Activated T-helper 1 cell treated with anti-CD3 and anti-CD28 coated beads, Interleukin-12 subunit alpha, Interleukin-12 subunit beta, Interleukin-2, Interleukin-4 antibody, amounts not matched to agents 30 ng/mL and 10 ng/mL and 1 ng/mL, durations not matched to agents 14 hours and 24 hours and 36 hours (primary cell): ENCODE measurements at regions of chr18 and their contacts with region 1.

Region 1: GRCh38 chr18:63320046-63320689 is 599 bp upstream of the BCL2 start:
- DNase-seq: peak; percentile 83
- H3K4me3 Mint-ChIP-seq: peak overlapping the region; percentile 90
- H3K27ac Mint-ChIP-seq: peak overlapping the region; percentile 94
- H3K4me1 Mint-ChIP-seq: peaks cover 42% of the 10 kb centered on the region
- H3K27me3 Mint-ChIP-seq: no peaks in the 10 kb centered on the region

Region 2: DNA sequence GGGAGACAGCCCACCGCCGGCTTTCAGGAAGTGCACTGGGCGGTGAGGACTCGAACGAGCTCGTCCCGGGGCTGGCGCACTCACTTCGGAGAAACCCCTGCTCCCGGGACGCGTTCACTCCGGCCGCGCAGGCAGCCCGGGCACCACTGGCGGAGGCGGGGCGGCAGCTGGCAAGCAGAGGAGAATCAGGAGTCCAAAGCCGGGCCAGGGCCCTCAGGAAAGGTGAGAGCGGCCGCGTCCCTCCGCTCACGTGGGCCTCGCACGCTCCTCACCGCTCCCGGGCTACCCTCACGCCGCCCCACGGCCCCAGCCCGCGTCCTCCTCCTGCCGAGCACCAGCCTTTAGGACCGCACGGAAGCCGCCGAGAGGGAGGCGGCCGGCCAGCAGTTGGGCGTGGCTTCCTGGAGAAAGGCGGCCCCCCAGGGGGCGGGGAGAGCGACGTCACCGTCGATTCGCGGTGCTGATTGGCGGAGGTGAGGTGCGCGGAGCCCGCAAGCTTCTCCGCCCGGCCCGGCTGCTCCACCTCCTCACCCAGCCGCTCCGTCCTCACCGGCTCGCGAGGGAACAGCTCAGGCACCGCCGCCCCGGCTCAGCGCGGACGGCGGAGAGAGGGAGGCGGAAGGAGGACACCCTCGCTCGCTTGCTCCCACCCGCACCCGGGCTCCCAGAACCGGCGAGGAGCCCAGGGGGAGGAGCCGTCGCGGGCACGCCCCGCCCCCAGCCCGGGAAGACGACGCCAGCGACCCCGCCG is 797.5 kb before region 1 on chr18 and contains the start of gene ZCCHC2:
- intact Hi-C with region 1: loop called (anchors 10 kb)
- DNase-seq: peak; percentile 99
- H3K4me3 Mint-ChIP-seq: peak within 1 kb of the TSS; percentile 98
- H3K27ac Mint-ChIP-seq: peak within 1 kb of the TSS; percentile 94
- H3K4me1 Mint-ChIP-seq: peaks cover 35% of the 10 kb centered on the region
- H3K27me3 Mint-ChIP-seq: peaks cover 4% of the 10 kb centered on the region
- total RNA-seq, gene ZCCHC2: 55.7 and 58.8 TPM in 2 replicates

Region 3: DNA sequence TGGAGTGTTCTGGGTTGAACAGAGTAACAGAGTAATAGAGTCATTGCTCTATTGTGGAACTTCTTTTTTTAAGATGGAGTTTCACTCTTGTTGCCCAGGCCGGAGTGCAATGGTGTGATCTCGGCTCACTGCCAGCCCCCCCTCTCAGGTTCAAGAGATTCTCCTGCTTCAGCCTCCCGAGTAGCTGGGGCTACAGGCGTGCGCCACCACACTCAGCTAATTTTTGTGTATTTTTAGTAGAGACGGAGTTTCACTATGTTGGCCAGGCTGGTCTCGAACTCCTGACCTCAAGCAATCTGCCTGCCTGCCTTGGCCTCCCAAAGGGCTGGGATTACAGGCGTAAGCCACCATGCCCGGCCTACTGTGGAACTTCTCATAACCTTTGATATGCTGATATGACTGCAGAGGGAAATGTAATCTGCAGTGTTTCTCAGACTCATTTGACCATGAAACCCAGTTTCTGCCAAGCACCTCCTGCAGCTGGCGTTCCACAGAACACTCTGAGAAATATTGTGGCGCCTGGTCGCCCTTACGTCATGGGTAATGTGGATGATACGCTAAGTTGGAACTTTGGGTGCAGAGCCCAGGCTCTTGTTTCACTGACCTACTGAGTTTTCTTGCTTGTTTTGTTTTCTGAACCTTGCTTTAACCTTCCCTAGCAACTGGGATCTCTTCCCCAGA is 214.4 kb before region 1 on chr18:
- intact Hi-C with region 1: loop called (anchors 1 kb)
- DNase-seq: no peak
- H3K4me3 Mint-ChIP-seq: no peak overlapping the region
- H3K27ac Mint-ChIP-seq: no peak overlapping the region
- H3K4me1 Mint-ChIP-seq: peaks cover 37% of the 10 kb centered on the region
- H3K27me3 Mint-ChIP-seq: peaks cover 20% of the 10 kb centered on the region

Region 4: DNA sequence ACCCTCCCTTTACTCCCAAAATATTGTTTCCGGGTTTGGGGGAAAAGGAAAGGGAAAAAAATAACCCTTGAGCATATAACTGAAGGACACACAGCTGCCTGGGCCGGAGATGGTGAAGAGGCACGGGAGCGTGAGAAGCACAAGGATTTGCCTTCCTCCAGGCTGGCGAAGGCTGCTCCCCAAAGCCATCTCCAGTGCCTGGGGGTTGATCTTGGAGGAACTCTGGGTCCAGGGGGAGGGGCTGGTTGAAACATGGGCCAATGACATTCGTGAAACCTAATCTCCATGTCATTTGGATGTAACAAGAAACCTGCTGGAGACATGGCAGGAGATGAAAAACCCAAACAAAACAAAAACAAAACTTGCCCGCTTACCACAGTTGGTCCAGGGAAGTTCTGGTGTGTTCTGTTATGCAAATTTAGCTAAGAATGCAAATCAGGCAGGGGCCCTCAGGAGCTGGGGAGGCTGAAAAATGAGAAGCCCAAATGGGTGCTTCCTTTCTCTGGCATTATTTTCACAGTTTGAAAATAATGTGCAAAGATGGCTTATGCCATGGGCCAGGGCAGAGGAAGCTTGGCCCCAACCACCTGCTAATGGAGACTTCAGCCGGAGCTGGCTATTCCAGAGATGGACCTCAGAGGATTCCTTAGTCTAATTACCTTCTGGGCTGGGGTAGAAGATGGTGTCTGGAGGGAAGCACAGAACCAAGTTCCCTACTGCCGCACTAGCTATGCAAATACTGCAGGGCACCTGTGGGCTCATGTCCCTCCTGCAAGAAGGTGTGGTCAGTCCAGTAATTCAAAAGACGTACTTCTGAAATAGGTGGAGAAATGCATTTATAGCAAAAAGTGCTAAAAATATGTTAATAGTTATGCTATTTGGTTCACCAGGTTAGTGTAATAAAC is 181.5 kb before region 1 on chr18:
- intact Hi-C with region 1: loop called (anchors 1 kb)
- DNase-seq: no peak
- H3K4me3 Mint-ChIP-seq: peak overlapping the region; percentile 73
- H3K27ac Mint-ChIP-seq: peak overlapping the region; percentile 90
- H3K4me1 Mint-ChIP-seq: peaks cover 71% of the 10 kb centered on the region
- H3K27me3 Mint-ChIP-seq: no peaks in the 10 kb centered on the region

Region 5: DNA sequence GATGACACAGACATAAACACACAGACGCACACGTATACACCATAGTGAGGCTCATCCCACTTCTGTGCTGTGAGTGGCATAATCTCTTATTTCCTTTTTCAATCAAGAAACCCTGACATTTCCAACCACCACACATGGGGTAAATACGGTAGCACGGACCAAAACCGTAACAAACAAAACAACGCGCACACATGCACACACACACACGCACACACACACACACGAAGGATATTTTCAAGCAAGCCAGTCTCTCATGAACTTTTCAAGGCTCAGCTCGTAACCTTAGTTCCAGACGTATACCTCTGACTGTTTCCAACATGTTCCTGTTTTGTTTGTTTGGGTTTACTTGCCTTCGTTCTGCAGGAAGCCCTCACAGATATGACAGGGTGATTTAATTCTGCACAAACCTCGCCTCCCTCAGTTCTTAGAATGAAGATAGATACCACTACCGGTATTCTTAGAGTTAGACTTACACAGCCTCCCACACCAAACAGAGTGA is 120.4 kb before region 1 on chr18:
- intact Hi-C with region 1: loop called (anchors 1 kb)
- DNase-seq: peak; percentile 60
- H3K4me3 Mint-ChIP-seq: no peak overlapping the region
- H3K27ac Mint-ChIP-seq: no peak overlapping the region
- H3K4me1 Mint-ChIP-seq: peaks cover 25% of the 10 kb centered on the region
- H3K27me3 Mint-ChIP-seq: no peaks in the 10 kb centered on the region

Region 6: GRCh38 chr18:63267975-63268721 is 52.0 kb before region 1 on chr18:
- intact Hi-C with region 1: loop called (anchors 1 kb)
- DNase-seq: no peak
- H3K4me3 Mint-ChIP-seq: peak overlapping the region; percentile 15
- H3K27ac Mint-ChIP-seq: peak overlapping the region; percentile 65
- H3K4me1 Mint-ChIP-seq: peaks cover 74% of the 10 kb centered on the region
- H3K27me3 Mint-ChIP-seq: no peaks in the 10 kb centered on the region

Region 7: DNA sequence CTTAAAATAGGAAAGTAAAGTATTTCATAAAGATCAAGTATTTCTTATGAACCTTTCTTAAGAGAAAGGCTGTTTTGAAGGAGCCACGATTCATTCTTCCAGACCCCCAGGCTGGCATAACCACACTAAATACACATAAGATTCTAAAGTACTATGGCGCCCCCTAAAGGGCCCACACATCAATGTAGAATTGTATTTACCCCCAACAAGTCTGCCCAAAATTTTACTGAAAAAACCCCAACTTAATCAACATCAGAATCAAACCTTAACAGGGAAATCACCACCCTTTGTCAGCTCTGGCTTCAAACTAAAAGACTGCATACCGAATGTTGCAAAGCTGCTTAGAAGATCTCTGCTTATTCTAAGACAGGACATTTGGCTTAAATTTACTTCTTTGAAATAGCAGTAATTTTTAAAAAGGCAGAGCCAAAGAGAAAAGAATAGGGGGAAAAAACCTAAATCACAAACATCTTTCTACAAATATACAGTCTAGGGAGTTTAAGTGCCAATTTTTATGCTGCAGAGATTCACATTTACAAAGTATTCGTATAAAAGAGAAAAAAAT is 19.8 kb after region 1 on chr18:
- intact Hi-C with region 1: no loop called
- DNase-seq: peak; percentile 19
- H3K4me3 Mint-ChIP-seq: no peak overlapping the region
- H3K27ac Mint-ChIP-seq: no peak overlapping the region
- H3K4me1 Mint-ChIP-seq: peaks cover 19% of the 10 kb centered on the region
- H3K27me3 Mint-ChIP-seq: no peaks in the 10 kb centered on the region

Region 8: DNA sequence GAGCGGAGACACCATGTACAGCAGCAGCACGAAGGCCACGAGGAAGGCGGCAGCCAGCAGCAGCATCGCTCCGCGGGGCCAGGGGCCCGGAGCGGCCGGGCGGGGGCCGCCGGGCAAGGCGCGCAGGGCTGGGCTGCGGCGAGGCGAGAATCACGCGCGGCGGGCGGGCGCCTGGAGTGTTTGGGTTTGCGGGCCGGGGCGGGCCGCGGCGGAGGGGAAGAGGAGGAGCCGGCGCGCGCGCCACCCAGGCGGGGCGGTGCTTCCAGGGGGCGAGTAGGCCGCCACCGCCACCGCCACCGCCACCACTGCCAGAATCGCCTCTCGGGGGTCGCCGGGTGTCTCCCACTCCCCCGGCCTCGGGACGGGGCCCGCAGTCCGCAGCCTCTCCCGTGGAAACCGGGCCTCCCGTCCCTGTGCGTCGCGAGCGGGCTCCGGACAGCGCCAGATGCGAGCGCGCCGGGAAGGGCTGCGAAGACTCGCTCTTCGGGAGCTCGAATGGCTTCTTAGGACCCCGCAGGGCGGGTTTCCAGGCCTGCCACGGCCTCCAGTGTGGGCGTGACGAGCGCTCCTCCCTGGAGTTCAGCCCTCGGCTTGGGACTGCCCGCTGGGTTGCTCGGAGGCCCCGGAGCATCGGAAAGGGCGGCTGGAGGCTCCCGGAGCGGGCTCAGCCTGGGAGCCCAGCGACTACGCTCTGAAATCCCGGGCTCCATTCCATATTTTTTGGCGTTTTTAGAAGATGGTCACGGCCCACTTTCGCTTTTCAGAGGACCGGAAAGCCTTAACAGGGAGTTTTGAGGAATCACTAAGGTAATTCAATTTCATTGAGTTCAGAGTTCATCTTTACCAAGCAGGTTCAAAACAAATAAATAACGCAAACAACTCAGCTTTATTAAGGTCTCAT is 47.1 kb after region 1 on chr18 and contains the start of gene KDSR:
- intact Hi-C with region 1: loop called (anchors 1 kb)
- DNase-seq: peak; percentile 82
- H3K4me3 Mint-ChIP-seq: peak within 1 kb of the TSS; percentile 93
- H3K27ac Mint-ChIP-seq: peak within 1 kb of the TSS; percentile 83
- H3K4me1 Mint-ChIP-seq: peaks cover 44% of the 10 kb centered on the region
- H3K27me3 Mint-ChIP-seq: no peaks in the 10 kb centered on the region
- total RNA-seq, gene KDSR: 72.2 and 83.5 TPM in 2 replicates